ENCODE measurements at regions of chr18 and their contacts with region 1.

Region 1: DNA sequence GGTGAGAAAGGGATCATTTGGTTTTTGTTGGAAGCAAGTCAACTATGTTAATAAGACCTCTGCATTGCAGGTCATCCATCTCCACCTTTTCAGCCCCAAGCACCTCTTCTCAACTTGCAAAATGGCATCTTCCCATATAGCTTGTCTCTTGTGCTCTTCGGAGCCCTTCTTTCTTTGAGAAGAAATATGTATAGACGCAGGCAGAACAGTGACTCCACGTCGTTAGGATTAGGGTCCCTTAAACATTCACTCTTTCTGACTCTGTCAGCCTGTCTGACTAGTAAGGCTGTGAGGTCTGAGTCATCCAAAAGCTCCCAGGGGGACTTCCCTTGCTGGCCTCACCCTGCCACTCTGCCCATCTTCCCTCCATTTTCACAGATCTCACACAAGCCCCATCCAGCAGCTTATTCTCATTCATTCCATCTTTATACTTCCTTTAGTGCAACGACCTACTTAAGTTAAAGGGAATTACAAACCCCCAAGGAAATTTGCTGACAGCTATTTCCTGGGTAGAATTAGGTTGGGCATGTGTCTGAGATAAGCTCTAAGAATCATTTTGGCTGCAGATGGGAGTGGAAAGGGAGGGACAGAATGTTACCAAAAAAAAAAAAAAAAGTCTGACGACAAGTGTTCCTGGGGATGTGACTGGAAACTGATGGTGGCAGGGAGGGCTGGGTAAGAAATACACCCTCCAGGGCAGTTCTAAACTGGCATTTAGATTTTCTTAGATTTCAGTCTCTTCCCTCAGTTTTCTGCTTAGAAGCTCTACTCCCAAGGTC is 37.7 kb upstream of the MEX3C start:
- DNase-seq: peak; percentile 67
- H3K4me3 Mint-ChIP-seq: no peak overlapping the region
- H3K27ac Mint-ChIP-seq: peak overlapping the region; percentile 52
- H3K4me1 Mint-ChIP-seq: peaks cover 21% of the 10 kb centered on the region
- H3K27me3 Mint-ChIP-seq: no peaks in the 10 kb centered on the region
- CTCF ChIP-seq: no peak

Region 2: GRCh38 chr18:50797142-50797541 is 438.1 kb before region 1 on chr18:
- CTCF ChIA-PET with region 1: no interaction called
- POLR2A ChIA-PET with region 1: no interaction called
- intact Hi-C with region 1: no loop called
- DNase-seq: no peak
- H3K4me3 Mint-ChIP-seq: no peak overlapping the region
- H3K27ac Mint-ChIP-seq: no peak overlapping the region
- H3K4me1 Mint-ChIP-seq: no peaks in the 10 kb centered on the region
- H3K27me3 Mint-ChIP-seq: peaks cover 44% of the 10 kb centered on the region
- CTCF ChIP-seq: no peak

Region 3: DNA sequence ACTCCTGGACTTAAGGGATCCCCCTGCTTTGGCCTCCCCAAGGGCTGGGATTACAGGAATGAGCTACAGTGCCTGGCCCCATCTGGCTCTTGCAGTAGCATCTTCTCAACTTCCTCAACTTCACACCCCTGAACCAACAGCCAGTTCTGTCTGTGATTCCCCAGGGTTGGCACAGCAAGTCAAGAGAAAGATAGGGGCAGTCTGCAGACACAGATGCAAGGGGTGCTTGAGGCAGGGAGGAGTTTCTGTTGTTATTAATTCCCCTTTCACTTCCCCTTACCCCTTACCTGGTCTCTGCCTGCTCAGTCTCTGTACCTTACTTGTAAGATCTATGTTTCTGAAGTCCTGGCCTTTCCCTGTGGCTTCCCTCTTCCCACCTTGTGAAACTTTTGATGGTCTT is 16.4 kb after region 1 on chr18:
- CTCF ChIA-PET with region 1: interaction called, 10 read pairs
- POLR2A ChIA-PET with region 1: interaction called, 3 read pairs
- intact Hi-C with region 1: no loop called
- DNase-seq: no peak
- H3K4me3 Mint-ChIP-seq: no peak overlapping the region
- H3K27ac Mint-ChIP-seq: no peak overlapping the region
- H3K4me1 Mint-ChIP-seq: peaks cover 6% of the 10 kb centered on the region
- H3K27me3 Mint-ChIP-seq: no peaks in the 10 kb centered on the region
- CTCF ChIP-seq: no peak

Region 4: GRCh38 chr18:51330148-51330547 is 94.9 kb after region 1 on chr18:
- CTCF ChIA-PET with region 1: no interaction called
- POLR2A ChIA-PET with region 1: no interaction called
- intact Hi-C with region 1: no loop called
- DNase-seq: peak; percentile 81
- H3K4me3 Mint-ChIP-seq: peak overlapping the region; percentile 13
- H3K27ac Mint-ChIP-seq: peak overlapping the region; percentile 18
- H3K4me1 Mint-ChIP-seq: peaks cover 13% of the 10 kb centered on the region
- H3K27me3 Mint-ChIP-seq: no peaks in the 10 kb centered on the region
- CTCF ChIP-seq: no peak